ENCODE measurements at regions of chr12 and their contacts with region 1.

Region 1: GRCh38 chr12:48851883-48852733 is at the start of gene DDX23:
- DNase-seq: peak; percentile 83
- H3K4me3 ChIP-seq: peak within 1 kb of the TSS; percentile 97
- CTCF ChIP-seq: no peak

Region 2: GRCh38 chr12:48814262-48815125 is 37.6 kb before region 1 on chr12:
- CTCF ChIA-PET with region 1: interaction called, 56 read pairs
- POLR2A ChIA-PET with region 1: no interaction called
- DNase-seq: no peak
- H3K4me3 ChIP-seq: peak overlapping the region; percentile 83
- CTCF ChIP-seq: peak; percentile 99

Region 3: DNA sequence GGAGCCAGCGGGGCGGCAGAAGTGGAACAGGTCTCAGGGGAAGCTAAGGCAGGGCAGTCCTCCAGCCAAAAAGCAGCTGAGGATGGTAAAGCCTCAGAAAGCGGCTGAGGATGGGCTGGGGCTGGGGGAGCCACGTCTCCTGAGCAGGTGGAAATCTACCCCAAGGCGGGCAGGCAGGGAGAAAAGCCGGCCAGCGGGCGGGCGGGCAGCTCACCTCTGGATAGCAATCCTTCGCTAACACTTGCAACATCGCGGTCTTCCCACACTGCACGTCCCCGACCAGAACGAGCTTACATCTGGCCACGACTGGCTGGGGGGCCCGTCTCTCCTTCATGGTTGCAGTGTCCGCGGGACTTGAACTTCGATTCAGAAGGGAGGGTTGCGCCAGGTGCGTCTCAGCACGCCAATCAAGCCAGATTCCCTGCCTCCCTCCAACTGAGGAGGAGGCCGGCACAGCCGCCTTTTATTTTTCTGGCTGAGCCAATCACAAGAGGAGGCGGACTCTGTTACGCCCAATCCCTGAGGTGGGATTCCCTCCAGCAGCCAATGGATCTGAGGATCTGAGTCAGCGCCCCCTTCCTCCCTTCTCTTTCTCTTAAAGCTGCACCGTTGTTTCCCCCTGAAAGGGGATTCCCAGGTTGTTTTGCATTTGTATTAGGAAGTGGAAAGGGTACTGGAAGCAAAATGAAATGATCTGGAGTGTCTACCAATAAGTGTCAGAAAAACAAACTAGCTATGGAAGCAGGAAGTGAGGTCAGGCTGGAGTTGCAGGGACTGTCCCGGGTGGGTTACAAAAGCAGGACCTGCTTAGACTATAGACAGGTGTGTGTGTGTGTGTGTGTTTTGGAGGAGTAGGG is 13.6 kb after region 1 on chr12 and contains the start of gene RND1:
- CTCF ChIA-PET with region 1: interaction called, 76 read pairs
- POLR2A ChIA-PET with region 1: interaction called, 16 read pairs
- DNase-seq: peak; percentile 36
- H3K4me3 ChIP-seq: peak within 1 kb of the TSS; percentile 77
- CTCF ChIP-seq: no peak

Region 4: GRCh38 chr12:48903982-48904411 is 51.9 kb after region 1 on chr12:
- CTCF ChIA-PET with region 1: interaction called, 25 read pairs
- POLR2A ChIA-PET with region 1: no interaction called
- DNase-seq: no peak
- H3K4me3 ChIP-seq: peak overlapping the region; percentile 58
- CTCF ChIP-seq: peak; percentile 72

Region 5: GRCh38 chr12:48957141-48958048 is 105.3 kb after region 1 on chr12 and contains the start of gene ARF3:
- CTCF ChIA-PET with region 1: interaction called, 16 read pairs
- POLR2A ChIA-PET with region 1: no interaction called
- DNase-seq: no peak
- H3K4me3 ChIP-seq: peak within 1 kb of the TSS; percentile 99
- CTCF ChIP-seq: no peak

Region 6: GRCh38 chr12:48988030-48988649 is 136.0 kb after region 1 on chr12:
- CTCF ChIA-PET with region 1: interaction called, 66 read pairs
- POLR2A ChIA-PET with region 1: no interaction called
- DNase-seq: no peak
- H3K4me3 ChIP-seq: no peak overlapping the region
- CTCF ChIP-seq: peak; percentile 85

Measured in AG04449 (cell line).